ENCODE measurements at regions of chr2 and their contacts with region 1.

Region 1: GRCh38 chr2:166417669-166418068 is 41.9 kb upstream of the SCN9A start:
- DNase-seq: peak in 2 of 4 experiments; percentile 31 to 67
- ATAC-seq: peak; percentile 81
- H3K4me3 ChIP-seq: no peak overlapping the region
- H3K27ac ChIP-seq: no peak overlapping the region
- H3K4me1 ChIP-seq: no peaks in the 10 kb centered on the region
- H3K27me3 ChIP-seq: no peaks in the 10 kb centered on the region
- CTCF ChIP-seq: peak; percentile 31 to 58 (median 36); a peak in 3 of 6 replicates
- EP300 ChIP-seq: no peak
- POLR2A ChIP-seq: no peak
- RAD21 ChIP-seq: peak; percentile 30 to 52

Region 2: GRCh38 chr2:165927353-165927752 is 490.3 kb before region 1 on chr2:
- CTCF ChIA-PET with region 1: no interaction called
- POLR2A ChIA-PET with region 1: no interaction called
- in situ Hi-C with region 1: loop called (anchors 25 kb)
- intact Hi-C with region 1: no loop called
- DNase-seq: no peak
- ATAC-seq: no peak
- H3K4me3 ChIP-seq: no peak overlapping the region
- H3K27ac ChIP-seq: no peak overlapping the region
- H3K4me1 ChIP-seq: no peaks in the 10 kb centered on the region
- H3K27me3 ChIP-seq: no peaks in the 10 kb centered on the region
- CTCF ChIP-seq: no peak
- EP300 ChIP-seq: no peak
- POLR2A ChIP-seq: no peak
- RAD21 ChIP-seq: no peak

Region 3: DNA sequence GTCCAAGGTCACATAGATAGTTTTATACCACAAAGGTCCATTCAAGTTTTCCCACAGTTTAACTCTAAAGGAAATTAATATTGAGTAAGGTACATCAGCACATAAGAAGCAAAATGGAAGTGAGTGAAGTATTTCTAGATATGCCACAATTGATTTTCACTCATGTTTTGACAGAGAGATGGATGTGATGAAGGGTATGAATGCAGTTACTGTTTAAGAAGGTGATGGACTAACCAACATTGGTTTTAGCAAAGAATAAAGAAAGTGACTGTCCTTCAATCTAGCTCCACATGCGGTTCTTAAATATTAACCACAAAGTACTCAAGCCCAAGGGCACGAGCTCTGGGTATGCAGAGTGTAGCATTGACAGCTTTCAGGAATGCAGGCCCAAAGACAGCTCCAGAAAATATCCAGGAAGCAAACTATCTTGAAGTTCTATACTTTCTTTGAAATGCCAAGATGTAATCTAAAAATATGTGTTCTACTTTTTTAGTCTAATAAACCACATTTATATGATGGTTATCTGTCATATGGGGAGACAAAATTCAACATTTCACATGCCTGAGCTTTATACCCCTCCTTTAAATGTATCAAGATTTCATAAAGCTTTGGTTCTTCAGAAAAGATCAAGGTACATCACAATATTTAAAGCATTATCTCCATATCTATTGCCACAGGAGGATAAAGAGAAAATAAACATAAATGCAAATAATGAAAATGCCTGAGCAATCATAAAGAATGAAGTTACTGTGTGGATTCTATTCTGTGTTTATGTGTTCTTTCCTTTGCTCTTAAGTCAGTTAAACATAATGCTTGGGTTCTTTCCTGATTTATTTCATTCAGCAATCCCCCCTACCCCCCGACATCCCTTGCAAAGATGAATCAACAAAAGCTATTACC is 283.2 kb before region 1 on chr2:
- CTCF ChIA-PET with region 1: no interaction called
- POLR2A ChIA-PET with region 1: no interaction called
- in situ Hi-C with region 1: no loop called
- intact Hi-C with region 1: loop called (anchors 5 kb)
- DNase-seq: no peak
- ATAC-seq: no peak
- H3K4me3 ChIP-seq: no peak overlapping the region
- H3K27ac ChIP-seq: no peak overlapping the region
- H3K4me1 ChIP-seq: no peaks in the 10 kb centered on the region
- H3K27me3 ChIP-seq: no peaks in the 10 kb centered on the region
- CTCF ChIP-seq: no peak
- EP300 ChIP-seq: no peak
- POLR2A ChIP-seq: no peak
- RAD21 ChIP-seq: no peak

Region 4: DNA sequence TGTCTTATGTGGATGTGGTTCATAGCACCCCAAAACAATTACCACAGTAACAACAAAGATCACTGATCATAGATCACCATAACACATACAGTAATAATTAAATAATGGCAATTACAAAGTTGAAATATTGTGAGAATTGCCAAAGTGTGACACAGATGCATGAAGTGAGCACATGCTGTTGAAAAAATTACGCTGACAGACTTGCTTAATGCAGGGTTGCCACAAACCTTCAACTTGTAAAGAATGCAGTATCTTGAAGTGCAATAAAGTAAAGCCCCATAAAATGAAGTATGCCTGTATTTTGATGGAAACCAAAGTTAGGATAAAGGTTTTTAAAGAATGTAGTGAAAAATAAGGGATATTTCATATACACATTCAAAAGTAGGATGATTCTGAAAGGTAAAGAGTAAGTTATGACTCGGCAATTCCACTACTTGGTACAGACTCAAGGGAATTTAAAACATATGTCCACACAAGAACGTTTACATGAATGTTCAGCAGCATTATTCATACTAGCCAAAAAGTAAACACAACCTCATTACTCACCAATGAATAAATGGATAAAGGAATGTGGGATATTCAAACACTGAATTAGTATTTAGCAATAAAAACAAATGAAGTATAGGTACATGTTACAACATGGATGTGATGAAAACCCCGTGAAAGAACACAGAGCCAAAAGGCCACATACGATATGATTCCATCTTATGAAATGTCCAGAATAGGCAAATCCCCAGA is 103.5 kb before region 1 on chr2:
- CTCF ChIA-PET with region 1: no interaction called
- POLR2A ChIA-PET with region 1: no interaction called
- in situ Hi-C with region 1: no loop called
- intact Hi-C with region 1: loop called (anchors 2 kb)
- DNase-seq: no peak
- ATAC-seq: peak; percentile 56; the same call in 2 of the 3 replicates
- H3K4me3 ChIP-seq: no peak overlapping the region
- H3K27ac ChIP-seq: no peak overlapping the region
- H3K4me1 ChIP-seq: no peaks in the 10 kb centered on the region
- H3K27me3 ChIP-seq: no peaks in the 10 kb centered on the region
- CTCF ChIP-seq: no peak
- EP300 ChIP-seq: no peak
- POLR2A ChIP-seq: no peak
- RAD21 ChIP-seq: no peak

Region 5: GRCh38 chr2:166516712-166517303 is 99.1 kb after region 1 on chr2:
- CTCF ChIA-PET with region 1: no interaction called
- POLR2A ChIA-PET with region 1: no interaction called
- in situ Hi-C with region 1: no loop called
- intact Hi-C with region 1: loop called (anchors 2 kb)
- DNase-seq: peak; percentile 13 to 50 (median 24)
- ATAC-seq: peak; percentile 87
- H3K4me3 ChIP-seq: no peak overlapping the region
- H3K27ac ChIP-seq: no peak overlapping the region
- H3K4me1 ChIP-seq: no peaks in the 10 kb centered on the region
- H3K27me3 ChIP-seq: no peaks in the 10 kb centered on the region
- CTCF ChIP-seq: peak; percentile 37 to 68 (median 48); a peak in 4 of 6 replicates
- EP300 ChIP-seq: no peak
- POLR2A ChIP-seq: no peak
- RAD21 ChIP-seq: peak; percentile 64 to 66

Region 6: GRCh38 chr2:166545473-166545872 is 127.8 kb after region 1 on chr2:
- CTCF ChIA-PET with region 1: no interaction called
- POLR2A ChIA-PET with region 1: no interaction called
- in situ Hi-C with region 1: no loop called
- intact Hi-C with region 1: no loop called
- DNase-seq: no peak
- ATAC-seq: no peak
- H3K4me3 ChIP-seq: no peak overlapping the region
- H3K27ac ChIP-seq: no peak overlapping the region
- H3K4me1 ChIP-seq: no peaks in the 10 kb centered on the region
- H3K27me3 ChIP-seq: no peaks in the 10 kb centered on the region
- CTCF ChIP-seq: no peak
- EP300 ChIP-seq: no peak
- POLR2A ChIP-seq: no peak
- RAD21 ChIP-seq: no peak

Region 7: GRCh38 chr2:166831930-166832329 is 414.3 kb after region 1 on chr2:
- CTCF ChIA-PET with region 1: no interaction called
- POLR2A ChIA-PET with region 1: no interaction called
- in situ Hi-C with region 1: no loop called
- intact Hi-C with region 1: no loop called
- DNase-seq: no peak
- ATAC-seq: no peak
- H3K4me3 ChIP-seq: no peak overlapping the region
- H3K27ac ChIP-seq: no peak overlapping the region
- H3K4me1 ChIP-seq: no peaks in the 10 kb centered on the region
- H3K27me3 ChIP-seq: no peaks in the 10 kb centered on the region
- CTCF ChIP-seq: no peak
- EP300 ChIP-seq: no peak
- POLR2A ChIP-seq: no peak
- RAD21 ChIP-seq: no peak

Measured in K562 (cell line).